Thyroid gland (tissue), 4 donors: ENCODE measurements at regions of chr2 and their contacts with region 1.

Region 1: GRCh38 chr2:182784777-182785176 is 68.7 kb downstream of the DNAJC10 start:
- DNase-seq: no peak
- H3K4me3 ChIP-seq: no peak overlapping the region
- H3K27ac ChIP-seq: no peak overlapping the region
- H3K4me1 ChIP-seq: no peaks in the 10 kb centered on the region
- H3K27me3 ChIP-seq: no peaks in the 10 kb centered on the region
- CTCF ChIP-seq: peak in 3 of 6 experiments; percentile 45 to 50 (median 50)
- POLR2A ChIP-seq: no peak

Region 2: DNA sequence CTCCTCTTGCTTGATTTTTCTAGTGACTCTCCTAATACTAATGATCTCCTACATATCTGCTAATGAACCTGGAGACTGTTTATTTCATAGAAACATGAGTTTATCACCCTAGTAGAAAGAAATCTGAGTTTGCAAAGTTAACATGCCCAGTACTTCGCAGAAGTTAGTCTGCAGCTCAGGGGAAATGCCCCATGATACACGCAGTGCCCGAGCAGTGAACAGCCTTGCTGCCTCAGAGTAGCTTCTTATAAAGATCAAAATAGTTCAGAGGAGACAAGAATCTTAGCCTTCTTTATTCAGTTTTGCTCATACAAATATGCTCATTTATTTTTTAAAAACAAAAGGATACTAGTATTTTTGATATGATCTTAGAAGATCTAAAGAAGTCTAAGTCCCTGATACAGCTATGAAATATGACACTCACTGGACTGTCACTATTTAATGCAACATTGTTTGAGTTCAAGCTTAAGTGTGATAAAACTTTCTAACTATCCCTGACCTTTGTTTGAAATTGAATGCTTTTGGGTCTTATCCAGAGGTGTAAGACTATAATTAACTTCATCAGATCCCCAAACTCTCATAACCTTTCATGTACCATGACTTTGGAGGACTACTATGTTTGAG is 61.1 kb after region 1 on chr2:
- intact Hi-C with region 1: no loop called
- DNase-seq: no peak
- H3K4me3 ChIP-seq: no peak overlapping the region
- H3K27ac ChIP-seq: no peak overlapping the region
- H3K4me1 ChIP-seq: no peaks in the 10 kb centered on the region
- H3K27me3 ChIP-seq: no peaks in the 10 kb centered on the region
- CTCF ChIP-seq: no peak
- POLR2A ChIP-seq: no peak

Region 3: DNA sequence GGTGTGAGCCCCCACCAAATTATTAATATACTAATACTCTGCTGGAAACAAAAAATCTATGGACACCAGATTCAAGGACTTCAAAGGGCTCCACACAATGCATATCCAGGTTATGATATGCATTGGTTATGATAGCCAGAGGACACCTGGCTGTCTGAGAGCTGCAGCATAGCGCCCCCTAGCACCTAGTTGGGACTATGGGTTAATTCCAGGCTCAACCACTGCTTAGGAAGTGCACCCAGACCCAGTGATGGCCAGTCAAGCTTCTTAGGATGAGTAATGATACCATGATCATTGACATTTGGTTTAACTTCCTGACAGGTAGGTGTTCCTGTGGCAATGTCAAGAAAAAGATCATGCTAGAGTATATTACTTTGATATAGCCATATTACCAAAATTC is 85.5 kb after region 1 on chr2:
- intact Hi-C with region 1: no loop called
- DNase-seq: no peak
- H3K4me3 ChIP-seq: no peak overlapping the region
- H3K27ac ChIP-seq: no peak overlapping the region
- H3K4me1 ChIP-seq: peaks cover 16% of the 10 kb centered on the region in 2 donors
- H3K27me3 ChIP-seq: no peaks in the 10 kb centered on the region
- CTCF ChIP-seq: no peak
- POLR2A ChIP-seq: no peak

Region 4: GRCh38 chr2:182977463-182977862 is 192.7 kb after region 1 on chr2:
- intact Hi-C with region 1: loop called (anchors 5 kb)
- DNase-seq: no peak
- H3K4me3 ChIP-seq: no peak overlapping the region
- H3K27ac ChIP-seq: no peak overlapping the region
- H3K4me1 ChIP-seq: peaks cover 0 to 6% of the 10 kb centered on the region in 2 donors
- H3K27me3 ChIP-seq: no peaks in the 10 kb centered on the region
- CTCF ChIP-seq: no peak
- POLR2A ChIP-seq: no peak